ENCODE measurements at regions of chr12 and their contacts with region 1.

Region 1: GRCh38 chr12:117367011-117367638 is 5.7 kb upstream of the NOS1 start:
- DNase-seq: peak; percentile 66 to 95
- H3K4me3 ChIP-seq: no peak overlapping the region
- H3K27ac ChIP-seq: no peak overlapping the region
- H3K4me1 ChIP-seq: no peaks in the 10 kb centered on the region; a peak in 2 of 7 replicates
- H3K27me3 ChIP-seq: peaks cover 5 to 26% (median 18%) of the 10 kb centered on the region in 4 experiments
- CTCF ChIP-seq: peak; percentile 78 to 96 (median 95)
- EP300 ChIP-seq: no peak
- POLR2A ChIP-seq: no peak
- RAD21 ChIP-seq: peak; percentile 97 to 99

Region 2: GRCh38 chr12:117352206-117352605 is 14.9 kb before region 1 on chr12:
- CTCF ChIA-PET with region 1: interaction called, 10 read pairs
- POLR2A ChIA-PET with region 1: interaction called, 3 read pairs
- DNase-seq: no peak
- H3K4me3 ChIP-seq: no peak overlapping the region
- H3K27ac ChIP-seq: no peak overlapping the region
- H3K4me1 ChIP-seq: peaks cover 0 to 4% (median 1%) of the 10 kb centered on the region in 4 experiments; a peak in 2 of 7 replicates
- H3K27me3 ChIP-seq: no peaks in the 10 kb centered on the region; a peak in 1 of 7 replicates
- CTCF ChIP-seq: no peak
- EP300 ChIP-seq: no peak
- POLR2A ChIP-seq: no peak
- RAD21 ChIP-seq: no peak

Region 3: DNA sequence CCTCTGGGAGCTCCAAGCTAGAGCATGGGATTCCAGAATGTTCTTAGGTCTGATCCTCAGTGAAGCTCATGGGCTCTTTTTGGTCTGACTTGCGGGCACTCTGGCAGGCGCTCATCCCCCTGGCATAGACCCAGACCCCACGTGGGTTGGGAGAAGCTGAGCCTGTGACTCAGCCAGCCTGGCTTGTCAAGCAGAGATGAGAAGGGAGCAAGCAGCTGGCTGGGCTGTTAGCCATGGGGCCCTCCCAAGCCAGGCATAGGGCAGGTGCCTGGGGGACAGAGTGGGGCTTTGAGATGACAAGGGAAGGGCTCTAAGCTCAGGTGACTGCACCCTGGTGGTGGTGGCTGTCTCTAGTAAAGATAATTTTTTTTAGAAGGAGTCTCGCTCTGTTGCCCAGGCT is 74.6 kb after region 1 on chr12:
- CTCF ChIA-PET with region 1: interaction called, 16 read pairs
- POLR2A ChIA-PET with region 1: no interaction called
- DNase-seq: no peak
- H3K4me3 ChIP-seq: no peak overlapping the region
- H3K27ac ChIP-seq: no peak overlapping the region
- H3K4me1 ChIP-seq: peaks cover 0 to 5% (median 0%) of the 10 kb centered on the region in 4 experiments; a peak in 2 of 7 replicates
- H3K27me3 ChIP-seq: no peaks in the 10 kb centered on the region
- CTCF ChIP-seq: peak in 1 of 3 experiments; percentile 11; a peak in 1 of 4 replicates
- EP300 ChIP-seq: no peak
- POLR2A ChIP-seq: no peak
- RAD21 ChIP-seq: no peak

Region 4: DNA sequence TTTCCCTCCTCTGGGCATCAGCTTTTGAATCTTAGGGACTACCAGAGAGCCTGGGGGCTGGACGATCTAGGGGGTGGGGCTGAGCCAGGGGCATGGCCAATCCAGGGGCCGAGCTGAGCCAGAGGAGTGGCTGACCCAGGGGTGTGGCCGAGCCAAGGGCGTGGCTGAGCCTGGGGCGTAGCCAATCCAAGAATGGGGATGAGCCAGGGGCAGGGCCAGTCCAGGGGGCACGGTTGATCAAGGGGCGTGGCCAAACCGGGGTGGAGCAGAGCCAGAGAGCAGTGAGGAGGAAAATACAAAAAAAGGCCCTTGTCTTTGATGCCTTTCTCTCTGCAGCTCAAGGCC is 213.6 kb after region 1 on chr12:
- CTCF ChIA-PET with region 1: interaction called, 89 read pairs
- POLR2A ChIA-PET with region 1: no interaction called
- DNase-seq: peak; percentile 77 to 95
- H3K4me3 ChIP-seq: no peak overlapping the region
- H3K27ac ChIP-seq: no peak overlapping the region
- H3K4me1 ChIP-seq: peaks cover 5 to 15% (median 12%) of the 10 kb centered on the region in 4 experiments; a peak in 6 of 7 replicates
- H3K27me3 ChIP-seq: no peaks in the 10 kb centered on the region
- CTCF ChIP-seq: no peak
- EP300 ChIP-seq: no peak
- POLR2A ChIP-seq: no peak
- RAD21 ChIP-seq: no peak

Region 5: DNA sequence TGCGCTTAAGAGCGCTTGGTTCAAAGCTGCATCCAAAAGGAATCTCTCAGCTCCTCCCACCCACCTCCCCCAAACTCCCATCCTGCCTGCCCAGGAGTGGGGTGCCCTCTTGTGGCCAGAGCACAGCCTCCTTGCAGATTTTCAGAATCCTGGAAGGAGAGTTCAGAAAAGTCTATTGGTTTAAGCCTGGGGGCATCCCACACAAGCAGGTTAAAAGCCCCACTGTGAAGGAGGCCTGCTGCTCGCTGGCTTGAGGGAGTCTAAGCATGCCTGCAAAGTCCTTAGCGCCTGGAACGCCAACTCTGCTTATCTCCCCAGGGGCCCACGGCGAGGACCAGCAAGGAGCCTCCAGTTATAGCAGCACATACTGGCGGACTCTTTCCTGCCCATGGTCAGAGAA is 304.6 kb after region 1 on chr12:
- CTCF ChIA-PET with region 1: interaction called, 20 read pairs
- POLR2A ChIA-PET with region 1: no interaction called
- DNase-seq: peak; percentile 75 to 87
- H3K4me3 ChIP-seq: no peak overlapping the region
- H3K27ac ChIP-seq: no peak overlapping the region
- H3K4me1 ChIP-seq: peaks cover 0 to 4% (median 2%) of the 10 kb centered on the region in 4 experiments; a peak in 3 of 7 replicates
- H3K27me3 ChIP-seq: no peaks in the 10 kb centered on the region
- CTCF ChIP-seq: peak; percentile 84 to 93 (median 86)
- EP300 ChIP-seq: no peak
- POLR2A ChIP-seq: no peak
- RAD21 ChIP-seq: peak; percentile 88 to 95